ENCODE measurements at regions of chr5 and their contacts with region 1.

Region 1: DNA sequence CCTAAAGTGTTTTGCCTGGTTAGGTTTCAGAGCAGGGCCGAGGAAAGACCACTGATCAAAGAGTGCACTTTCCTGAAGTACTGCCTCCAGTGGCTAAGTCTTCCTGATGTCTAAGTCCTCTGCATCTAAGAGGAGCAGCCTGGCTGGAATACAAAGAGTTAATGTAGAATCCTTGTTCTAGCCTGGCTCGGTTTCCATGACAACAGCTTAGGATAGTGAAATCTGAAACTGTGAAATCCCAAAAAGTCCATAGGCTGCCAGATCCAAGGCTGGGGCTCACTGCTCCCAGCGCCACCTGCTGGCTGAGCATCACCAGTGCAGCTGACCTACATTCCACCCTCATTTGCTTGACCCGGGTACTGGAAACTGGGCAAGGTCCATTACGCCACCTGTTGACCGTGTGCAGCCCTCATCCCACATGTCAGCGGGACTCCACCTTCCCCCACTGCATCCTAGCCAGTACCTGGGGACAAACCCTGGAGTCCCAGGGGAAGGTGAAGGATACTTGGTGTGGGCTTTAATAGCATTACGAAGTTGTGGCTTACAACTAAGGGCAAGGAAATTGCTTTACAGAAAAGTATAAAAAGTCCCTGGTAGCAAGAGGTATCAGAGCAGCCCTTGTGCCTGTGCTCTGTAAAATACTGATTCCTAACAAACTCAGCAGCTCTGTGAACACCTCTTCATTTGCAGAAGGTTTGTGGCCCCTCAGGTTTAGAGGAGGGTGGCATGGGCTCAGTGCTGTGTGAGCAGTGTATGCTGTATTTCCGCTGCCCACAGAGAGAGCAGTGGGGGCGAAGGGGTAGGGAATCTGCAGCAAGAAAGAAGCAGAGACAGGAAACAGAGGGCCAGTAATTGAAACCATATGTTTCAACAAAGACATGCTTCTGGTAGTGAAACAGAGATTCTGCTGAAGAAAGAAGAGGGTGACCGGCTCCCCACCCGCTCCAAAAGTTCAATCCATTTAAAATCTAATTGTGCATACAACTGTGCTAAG is 36.0 kb downstream of the PCDHGC5 start:
- DNase-seq: peak; percentile 88 to 94
- ATAC-seq: peak; percentile 58 to 65
- H3K4me3 ChIP-seq: no peak overlapping the region
- H3K27ac ChIP-seq: peak overlapping the region; percentile 87 to 92 (median 90)
- H3K4me1 ChIP-seq: peaks cover 64 to 75% of the 10 kb centered on the region in 2 donors
- H3K27me3 ChIP-seq: no peaks in the 10 kb centered on the region
- CTCF ChIP-seq: peak; percentile 98 to 99 (median 99)
- POLR2A ChIP-seq: no peak

Region 2: DNA sequence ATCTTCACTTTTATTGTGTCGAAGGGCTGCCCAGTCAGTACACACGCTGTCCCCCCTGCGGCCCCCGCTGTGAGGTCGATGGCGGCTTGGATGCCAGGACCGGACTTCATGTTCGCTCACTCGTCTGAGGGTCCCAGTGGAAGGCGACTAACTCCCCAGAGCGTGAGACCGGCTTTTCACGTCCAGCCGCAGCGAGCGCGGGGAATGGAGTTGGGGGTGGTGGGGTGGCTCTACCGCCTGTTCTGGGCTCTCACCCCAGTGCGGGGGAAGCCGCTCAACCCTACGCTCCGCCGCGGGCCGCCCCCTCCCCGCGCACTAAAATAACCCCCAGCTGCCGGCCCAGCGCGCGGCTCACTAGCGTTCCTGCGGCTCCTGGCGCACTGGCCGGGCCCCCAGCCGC is 221.1 kb before region 1 on chr5 and contains the start of gene SLC25A2:
- in situ Hi-C with region 1: no loop called
- intact Hi-C with region 1: no loop called
- DNase-seq: no peak
- ATAC-seq: no peak
- H3K4me3 ChIP-seq: no peak within 1 kb of the TSS
- H3K27ac ChIP-seq: no peak within 1 kb of the TSS
- H3K4me1 ChIP-seq: no peaks in the 10 kb centered on the region
- H3K27me3 ChIP-seq: no peaks in the 10 kb centered on the region
- CTCF ChIP-seq: no peak
- POLR2A ChIP-seq: no peak
- total RNA-seq, gene SLC25A2: 0.49 TPM in 1 of 4 donors, not detected in the others

Region 3: GRCh38 chr5:141412854-141413539 is 111.9 kb before region 1 on chr5 and contains the start of gene PCDHGA10:
- in situ Hi-C with region 1: no loop called
- intact Hi-C with region 1: loop called (anchors 2 kb)
- DNase-seq: peak in 1 of 2 donors; percentile 55
- ATAC-seq: peak; percentile 63 to 64
- H3K4me3 ChIP-seq: peak within 1 kb of the TSS; percentile 35 to 50 (median 46)
- H3K27ac ChIP-seq: peak within 1 kb of the TSS; percentile 24 to 61 (median 41)
- H3K4me1 ChIP-seq: peaks cover 0 to 15% of the 10 kb centered on the region in 2 donors
- H3K27me3 ChIP-seq: no peaks in the 10 kb centered on the region
- CTCF ChIP-seq: peak; percentile 40 to 71 (median 57)
- POLR2A ChIP-seq: no peak
- total RNA-seq, gene PCDHGA10: 0.80 to 2.4 (median 1.2) TPM

Region 4: GRCh38 chr5:141475625-141476131 is 49.2 kb before region 1 on chr5 and contains the start of gene PCDHGC3:
- in situ Hi-C with region 1: loop called in 2 of 4 experiments (anchors 5 kb)
- intact Hi-C with region 1: loop called (anchors 1 kb)
- DNase-seq: peak; percentile 92 to 95
- ATAC-seq: peak; percentile 95
- H3K4me3 ChIP-seq: peak within 1 kb of the TSS; percentile 69 to 83 (median 75)
- H3K27ac ChIP-seq: peak within 1 kb of the TSS; percentile 82 to 91 (median 88)
- H3K4me1 ChIP-seq: peaks cover 48 to 53% of the 10 kb centered on the region in 2 donors
- H3K27me3 ChIP-seq: no peaks in the 10 kb centered on the region
- CTCF ChIP-seq: peak in 4 of 5 experiments; percentile 36 to 63 (median 58)
- POLR2A ChIP-seq: peak; percentile 35 to 67
- total RNA-seq, gene PCDHGC3: 11.8 to 14.5 (median 13.8) TPM

Region 5: GRCh38 chr5:141557681-141558136 is 32.8 kb after region 1 on chr5:
- in situ Hi-C with region 1: loop called in 1 of 4 experiments (anchors 5 kb)
- intact Hi-C with region 1: loop called (anchors 1 kb)
- DNase-seq: peak; percentile 80 to 93
- ATAC-seq: peak; percentile 72 to 79
- H3K4me3 ChIP-seq: peak overlapping the region; percentile 21 to 38 (median 30)
- H3K27ac ChIP-seq: peak overlapping the region; percentile 77 to 92 (median 88)
- H3K4me1 ChIP-seq: peaks cover 37 to 44% of the 10 kb centered on the region in 2 donors
- H3K27me3 ChIP-seq: no peaks in the 10 kb centered on the region
- CTCF ChIP-seq: peak; percentile 83 to 92 (median 91)
- POLR2A ChIP-seq: no peak

Region 6: GRCh38 chr5:141618804-141619554 is 94.1 kb after region 1 on chr5 and contains the start of gene DIAPH1:
- in situ Hi-C with region 1: no loop called
- intact Hi-C with region 1: loop called (anchors 5 kb)
- DNase-seq: peak; percentile 97 to 98
- ATAC-seq: peak; percentile 71 to 76
- H3K4me3 ChIP-seq: peak within 1 kb of the TSS; percentile 64 to 100 (median 89)
- H3K27ac ChIP-seq: peak within 1 kb of the TSS; percentile 89 to 100 (median 99)
- H3K4me1 ChIP-seq: peaks cover 36 to 37% of the 10 kb centered on the region in 2 donors
- H3K27me3 ChIP-seq: no peaks in the 10 kb centered on the region
- CTCF ChIP-seq: peak; percentile 100
- POLR2A ChIP-seq: peak; percentile 99
- total RNA-seq, gene DIAPH1: 98.3 to 324 (median 214) TPM